ENCODE measurements at regions of chr6 and their contacts with region 1.

Region 1: GRCh38 chr6:158072083-158072721 is 90.5 kb downstream of the SYNJ2 start:
- DNase-seq: peak; percentile 71
- ATAC-seq: peak; percentile 63
- H3K4me3 ChIP-seq: no peak overlapping the region
- H3K4me3 Mint-ChIP-seq: no peak overlapping the region
- H3K27ac ChIP-seq: no peak overlapping the region
- H3K27ac Mint-ChIP-seq: peak overlapping the region; percentile 22
- H3K4me1 ChIP-seq: peaks cover 0 to 5% of the 10 kb centered on the region in 2 donors
- H3K4me1 Mint-ChIP-seq: peaks cover 2% of the 10 kb centered on the region
- H3K27me3 ChIP-seq: no peaks in the 10 kb centered on the region
- H3K27me3 Mint-ChIP-seq: no peaks in the 10 kb centered on the region
- CTCF ChIP-seq: peak; percentile 85

Region 2: GRCh38 chr6:157946865-157947532 is 125.2 kb before region 1 on chr6:
- CTCF ChIA-PET with region 1: interaction called, 12 read pairs
- POLR2A ChIA-PET with region 1: no interaction called
- intact Hi-C with region 1: loop called (anchors 2 kb)
- DNase-seq: peak; percentile 45
- ATAC-seq: peak; percentile 24
- H3K4me3 ChIP-seq: no peak overlapping the region
- H3K4me3 Mint-ChIP-seq: no peak overlapping the region
- H3K27ac ChIP-seq: no peak overlapping the region
- H3K27ac Mint-ChIP-seq: peak overlapping the region; percentile 61
- H3K4me1 ChIP-seq: no peaks in the 10 kb centered on the region
- H3K4me1 Mint-ChIP-seq: no peaks in the 10 kb centered on the region
- H3K27me3 ChIP-seq: no peaks in the 10 kb centered on the region
- H3K27me3 Mint-ChIP-seq: no peaks in the 10 kb centered on the region
- CTCF ChIP-seq: peak; percentile 56

Region 3: DNA sequence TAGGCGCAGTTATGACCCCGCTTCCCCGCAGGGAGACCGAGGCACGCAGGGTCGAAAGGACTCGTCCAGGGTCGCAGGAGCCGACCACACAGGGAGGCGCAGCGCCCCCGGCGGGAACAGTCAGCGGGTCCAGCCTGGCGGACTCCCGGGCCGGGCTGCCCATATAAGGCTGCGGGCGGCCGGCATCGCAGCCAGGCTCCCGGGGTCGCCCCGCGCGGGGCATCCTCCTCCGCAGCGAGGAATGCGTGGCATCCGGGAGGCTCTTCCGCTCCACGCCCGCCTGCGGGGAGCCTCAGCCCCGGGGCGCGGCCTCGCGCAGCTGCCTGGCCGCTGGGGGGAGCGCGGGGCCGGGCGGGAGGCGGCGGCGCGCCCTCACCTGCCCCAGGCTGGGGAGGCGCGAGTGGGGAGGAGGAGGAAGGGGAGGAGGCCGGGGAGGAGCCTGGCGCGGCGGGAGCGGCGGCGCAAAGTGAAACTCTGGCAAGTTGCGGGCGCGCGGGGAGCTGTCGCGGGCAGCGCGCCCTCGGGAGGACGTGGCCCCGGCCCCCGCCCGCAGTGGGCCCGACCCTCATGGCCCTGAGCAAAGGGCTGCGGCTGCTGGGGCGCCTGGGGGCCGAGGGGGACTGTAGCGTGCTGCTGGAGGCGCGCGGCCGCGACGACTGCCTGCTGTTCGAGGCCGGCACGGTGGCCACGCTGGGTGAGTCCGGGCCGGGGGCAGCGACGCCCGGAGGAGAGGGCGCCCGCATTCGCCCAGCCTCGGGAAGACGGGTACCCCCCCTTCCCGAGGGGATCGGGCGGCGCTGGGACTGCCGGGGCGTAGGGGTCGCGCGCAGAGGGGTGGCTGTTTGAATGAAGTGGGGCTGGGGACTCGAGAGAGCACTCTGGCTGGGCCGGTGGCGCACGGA is 90.6 kb before region 1 on chr6 and contains the start of gene SYNJ2:
- CTCF ChIA-PET with region 1: interaction called, 27 read pairs
- POLR2A ChIA-PET with region 1: no interaction called
- intact Hi-C with region 1: loop called (anchors 1 kb)
- DNase-seq: peak; percentile 89
- ATAC-seq: peak; percentile 89
- H3K4me3 ChIP-seq: peak within 1 kb of the TSS; percentile 50 to 87 (median 77)
- H3K4me3 Mint-ChIP-seq: peak within 1 kb of the TSS; percentile 93
- H3K27ac ChIP-seq: peak within 1 kb of the TSS in 1 of 2 donors; percentile 72
- H3K27ac Mint-ChIP-seq: peak within 1 kb of the TSS; percentile 85
- H3K4me1 ChIP-seq: peaks cover 30 to 48% of the 10 kb centered on the region in 2 donors
- H3K4me1 Mint-ChIP-seq: peaks cover 40% of the 10 kb centered on the region
- H3K27me3 ChIP-seq: no peaks in the 10 kb centered on the region
- H3K27me3 Mint-ChIP-seq: no peaks in the 10 kb centered on the region
- CTCF ChIP-seq: peak; percentile 66
- total RNA-seq, gene SYNJ2: 11.4 and 12.8 TPM in 2 replicates

Region 4: GRCh38 chr6:158026054-158026900 is 45.9 kb before region 1 on chr6:
- CTCF ChIA-PET with region 1: interaction called, 14 read pairs
- POLR2A ChIA-PET with region 1: no interaction called
- intact Hi-C with region 1: loop called (anchors 5 kb)
- DNase-seq: peak; percentile 90
- ATAC-seq: peak; percentile 72
- H3K4me3 ChIP-seq: peak overlapping the region in 4 of 5 experiments; percentile 30 to 53 (median 38)
- H3K4me3 Mint-ChIP-seq: peak overlapping the region; percentile 87
- H3K27ac ChIP-seq: peak overlapping the region; percentile 62 to 63
- H3K27ac Mint-ChIP-seq: peak overlapping the region; percentile 97
- H3K4me1 ChIP-seq: peaks cover 18 to 23% of the 10 kb centered on the region in 2 donors
- H3K4me1 Mint-ChIP-seq: peaks cover 33% of the 10 kb centered on the region
- H3K27me3 ChIP-seq: no peaks in the 10 kb centered on the region
- H3K27me3 Mint-ChIP-seq: no peaks in the 10 kb centered on the region
- CTCF ChIP-seq: peak; percentile 74

Region 5: GRCh38 chr6:158031381-158032353 is 40.5 kb before region 1 on chr6:
- CTCF ChIA-PET with region 1: interaction called, 14 read pairs
- POLR2A ChIA-PET with region 1: no interaction called
- intact Hi-C with region 1: loop called (anchors 5 kb)
- DNase-seq: no peak
- ATAC-seq: peak; percentile 39
- H3K4me3 ChIP-seq: no peak overlapping the region
- H3K4me3 Mint-ChIP-seq: peak overlapping the region; percentile 65
- H3K27ac ChIP-seq: peak overlapping the region; percentile 35 to 52
- H3K27ac Mint-ChIP-seq: peak overlapping the region; percentile 89
- H3K4me1 ChIP-seq: peaks cover 17 to 26% of the 10 kb centered on the region in 2 donors
- H3K4me1 Mint-ChIP-seq: peaks cover 31% of the 10 kb centered on the region
- H3K27me3 ChIP-seq: no peaks in the 10 kb centered on the region
- H3K27me3 Mint-ChIP-seq: no peaks in the 10 kb centered on the region
- CTCF ChIP-seq: no peak

Region 6: GRCh38 chr6:158060455-158061360 is 11.5 kb before region 1 on chr6:
- CTCF ChIA-PET with region 1: interaction called, 10 read pairs
- POLR2A ChIA-PET with region 1: no interaction called
- intact Hi-C with region 1: no loop called
- DNase-seq: no peak
- ATAC-seq: no peak
- H3K4me3 ChIP-seq: no peak overlapping the region
- H3K4me3 Mint-ChIP-seq: no peak overlapping the region
- H3K27ac ChIP-seq: no peak overlapping the region
- H3K27ac Mint-ChIP-seq: no peak overlapping the region
- H3K4me1 ChIP-seq: no peaks in the 10 kb centered on the region
- H3K4me1 Mint-ChIP-seq: peaks cover 9% of the 10 kb centered on the region
- H3K27me3 ChIP-seq: no peaks in the 10 kb centered on the region
- H3K27me3 Mint-ChIP-seq: no peaks in the 10 kb centered on the region
- CTCF ChIP-seq: no peak

Measured in B cell (primary cell).